Dendritic cell treated with granulocyte-macrophage colony-stimulating factor and Interleukin-4, amounts not matched to agents 40 ng/mL and 50 ng/mL, for 4 days (primary cell): ENCODE measurements at regions of chr3 and their contacts with region 1.

Region 1: DNA sequence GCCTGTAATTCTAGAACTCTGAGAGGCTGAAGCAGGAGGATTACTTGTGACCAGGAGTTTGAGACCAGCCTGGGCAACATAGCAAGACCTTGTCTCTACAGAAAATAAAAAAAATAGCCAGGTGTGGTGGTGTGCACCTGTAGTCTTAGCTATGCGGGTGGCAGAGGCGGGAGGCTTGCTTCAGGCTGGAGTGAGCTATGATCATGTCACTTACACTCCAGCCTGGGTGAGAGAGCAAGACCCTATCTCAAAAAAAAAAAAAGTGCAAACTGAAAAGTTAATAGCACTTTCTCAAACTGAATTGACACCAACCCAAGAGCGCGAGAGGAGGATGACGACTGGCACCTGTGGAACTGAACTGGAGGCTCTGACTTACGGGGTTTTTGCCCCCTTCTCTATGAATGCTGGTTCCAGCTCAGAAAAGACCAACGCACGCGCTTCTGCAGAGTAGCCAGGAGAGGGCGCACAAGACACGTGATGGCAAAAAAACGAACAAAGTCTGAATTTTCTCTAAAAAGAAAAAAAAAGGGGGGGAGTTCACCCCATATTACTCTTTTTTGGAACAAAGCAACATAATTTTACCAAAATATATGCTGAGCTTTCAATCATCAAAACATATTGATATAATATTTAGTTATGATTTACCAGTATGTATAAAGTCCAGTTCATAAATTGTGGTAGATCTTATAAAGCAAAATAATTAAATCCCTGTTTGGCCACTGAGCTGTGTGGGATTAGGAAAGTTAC is 23.7 kb downstream of the CFAP92 start:
- H3K4me3 Mint-ChIP-seq: no peak overlapping the region
- H3K27ac Mint-ChIP-seq: no peak overlapping the region
- H3K4me1 Mint-ChIP-seq: peaks cover 9% of the 10 kb centered on the region
- H3K27me3 Mint-ChIP-seq: peaks cover 3% of the 10 kb centered on the region

Region 2: DNA sequence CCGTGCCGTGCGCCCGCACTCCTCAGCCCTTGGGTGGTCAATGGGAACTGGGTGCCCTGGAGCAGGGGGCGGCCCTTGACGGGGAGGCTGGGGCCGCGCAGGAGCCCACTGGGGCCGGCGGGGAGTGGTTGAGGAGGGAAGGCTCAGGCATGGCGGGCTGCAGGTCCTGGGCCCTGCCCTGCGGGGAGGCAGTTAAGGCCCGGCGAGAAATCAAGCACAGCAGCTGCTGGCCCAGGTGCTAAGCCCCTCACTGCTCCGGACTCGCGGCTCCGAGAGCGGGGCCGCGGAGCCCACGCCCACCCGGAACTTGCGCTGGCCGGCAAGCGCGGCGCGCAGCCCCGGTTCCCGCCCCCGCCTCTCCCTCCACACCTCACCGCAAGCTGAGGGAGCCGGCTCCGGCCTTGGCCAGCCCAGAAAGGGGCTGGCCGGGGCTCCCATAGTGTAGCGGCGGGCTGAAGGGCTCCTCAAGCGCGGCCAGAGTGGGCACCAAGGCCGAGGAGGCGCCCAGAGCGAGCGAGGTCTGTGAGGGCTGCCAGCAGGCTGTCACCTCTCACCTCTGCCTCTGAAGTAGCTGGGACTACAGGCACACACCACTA is 98.2 kb after region 1 on chr3:
- intact Hi-C with region 1: no loop called
- H3K4me3 Mint-ChIP-seq: peak overlapping the region; percentile 53
- H3K27ac Mint-ChIP-seq: peak overlapping the region; percentile 35
- H3K4me1 Mint-ChIP-seq: peaks cover 5% of the 10 kb centered on the region
- H3K27me3 Mint-ChIP-seq: peaks cover 24% of the 10 kb centered on the region

Region 3: DNA sequence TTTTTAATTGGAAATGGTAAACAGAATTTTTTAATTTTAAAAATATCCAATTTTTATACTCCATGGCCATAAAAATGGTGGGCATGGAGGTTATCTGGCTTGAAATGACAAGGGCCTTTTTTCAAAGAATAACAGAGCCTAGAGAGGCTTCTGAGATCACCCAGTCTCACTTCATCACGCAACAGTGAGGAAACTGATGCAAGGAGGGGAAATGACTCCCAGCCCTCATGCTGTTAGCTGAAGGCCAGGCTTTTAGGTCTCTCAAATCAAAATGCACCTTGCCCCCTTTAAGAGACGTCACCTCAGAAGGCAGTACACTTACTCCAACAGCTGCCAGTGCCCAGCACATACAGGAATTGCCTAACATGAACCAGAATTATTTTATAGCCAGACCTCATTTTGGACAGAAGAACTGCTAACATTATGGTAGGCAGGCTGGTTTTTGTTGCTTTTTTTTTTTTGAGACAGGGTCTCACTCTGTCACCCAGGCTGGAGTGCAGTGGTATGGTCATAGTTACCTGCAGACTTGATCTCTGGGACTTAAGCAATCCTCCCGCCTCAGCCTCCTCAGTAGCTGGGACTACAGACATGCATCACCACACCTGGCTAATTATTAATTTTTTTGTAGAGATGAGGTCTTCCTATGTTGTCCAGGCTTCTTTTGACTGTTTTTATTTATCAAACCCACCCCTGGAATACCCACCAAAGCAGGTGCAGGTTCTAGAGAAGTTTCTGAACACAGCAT is 142.3 kb after region 1 on chr3:
- intact Hi-C with region 1: no loop called
- H3K4me3 Mint-ChIP-seq: no peak overlapping the region
- H3K27ac Mint-ChIP-seq: no peak overlapping the region
- H3K4me1 Mint-ChIP-seq: peaks cover 47% of the 10 kb centered on the region
- H3K27me3 Mint-ChIP-seq: no peaks in the 10 kb centered on the region

Region 4: GRCh38 chr3:129323651-129324294 is 353.6 kb after region 1 on chr3:
- intact Hi-C with region 1: loop called (anchors 2 kb)
- H3K4me3 Mint-ChIP-seq: no peak overlapping the region
- H3K27ac Mint-ChIP-seq: no peak overlapping the region
- H3K4me1 Mint-ChIP-seq: no peaks in the 10 kb centered on the region
- H3K27me3 Mint-ChIP-seq: peaks cover 8% of the 10 kb centered on the region